Prostate gland (tissue), 2 donors: ENCODE measurements at regions of chr7 and their contacts with region 1.

Region 1: DNA sequence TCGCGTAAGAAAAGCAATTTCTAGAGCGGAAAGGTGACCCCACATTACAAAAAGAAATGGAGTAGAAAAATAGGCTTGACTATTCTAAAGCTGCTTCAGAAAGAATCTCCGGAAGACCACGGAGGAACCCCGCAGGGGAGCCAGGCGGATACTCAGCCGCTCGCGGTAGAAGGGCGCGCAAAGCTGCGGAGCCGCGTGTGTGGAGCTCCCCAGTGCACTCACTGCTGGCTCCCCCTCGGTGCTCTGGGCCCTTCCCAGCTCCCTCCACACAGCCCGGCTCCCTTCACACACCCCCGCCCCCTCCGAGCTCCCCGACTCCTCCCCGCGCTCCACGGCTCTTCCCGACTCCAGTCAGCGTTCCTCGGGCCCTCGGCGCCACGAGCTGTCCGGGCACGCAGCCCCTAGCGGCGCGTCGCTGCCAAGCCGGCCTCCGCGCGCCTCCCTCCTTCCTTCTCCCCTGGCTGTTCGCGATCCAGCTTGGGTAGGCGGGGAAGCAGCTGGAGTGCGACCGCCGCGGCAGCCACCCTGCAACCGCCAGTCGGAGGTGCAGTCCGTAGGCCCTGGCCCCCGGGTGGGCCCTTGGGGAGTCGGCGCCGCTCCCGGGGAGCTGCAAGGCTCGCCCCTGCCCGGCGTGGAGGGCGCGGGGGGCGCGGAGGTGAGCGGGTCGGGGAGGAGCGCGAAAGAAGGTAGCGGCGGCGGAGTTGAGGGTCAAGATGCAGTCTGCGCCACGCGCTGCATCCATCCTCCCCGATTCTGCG is at the start of gene STEAP2:
- DNase-seq: peak; percentile 90
- H3K4me3 ChIP-seq: peak within 1 kb of the TSS; percentile 75 to 87
- H3K27ac ChIP-seq: peak within 1 kb of the TSS; percentile 93 to 99
- H3K4me1 ChIP-seq: no peaks in the 10 kb centered on the region
- H3K27me3 ChIP-seq: no peaks in the 10 kb centered on the region
- CTCF ChIP-seq: peak in 3 of 4 experiments; percentile 27 to 72 (median 69)
- POLR2A ChIP-seq: peak; percentile 65
- total RNA-seq, gene STEAP2: 167 to 555 TPM

Region 2: GRCh38 chr7:90244909-90245851 is 33.6 kb after region 1 on chr7 and contains the start of gene CFAP69:
- intact Hi-C with region 1: loop called (anchors 5 kb)
- DNase-seq: peak; percentile 90
- H3K4me3 ChIP-seq: peak within 1 kb of the TSS; percentile 77 to 95
- H3K27ac ChIP-seq: peak within 1 kb of the TSS; percentile 85 to 93
- H3K4me1 ChIP-seq: no peaks in the 10 kb centered on the region
- H3K27me3 ChIP-seq: no peaks in the 10 kb centered on the region
- CTCF ChIP-seq: peak in 2 of 4 experiments; percentile 62 to 75
- POLR2A ChIP-seq: peak; percentile 23
- total RNA-seq, gene CFAP69: 27.4 to 50.6 TPM

Region 3: DNA sequence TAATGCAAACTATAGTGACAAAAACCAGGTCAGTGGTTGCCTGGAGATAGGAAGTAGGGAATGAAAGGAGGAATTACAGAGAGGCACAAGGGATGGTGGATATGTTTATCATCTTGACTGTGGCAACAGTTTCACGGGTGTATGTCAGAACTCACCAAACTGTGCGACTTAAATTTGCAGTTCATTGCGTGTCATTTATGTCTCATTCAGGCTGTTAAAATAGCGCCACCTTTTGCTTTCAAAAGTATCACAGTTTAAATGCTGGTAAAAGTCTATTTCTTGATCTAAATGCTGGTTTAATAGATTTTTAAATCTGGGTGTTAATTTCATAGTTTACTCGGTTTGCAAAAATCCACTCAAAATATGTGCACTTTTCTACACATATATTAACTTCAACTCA is 308.9 kb after region 1 on chr7:
- intact Hi-C with region 1: no loop called
- DNase-seq: no peak
- H3K4me3 ChIP-seq: no peak overlapping the region
- H3K27ac ChIP-seq: no peak overlapping the region
- H3K4me1 ChIP-seq: no peaks in the 10 kb centered on the region
- H3K27me3 ChIP-seq: no peaks in the 10 kb centered on the region
- CTCF ChIP-seq: peak in 1 of 4 experiments; percentile 20
- POLR2A ChIP-seq: no peak